ENCODE measurements at regions of chr5 and their contacts with region 1.

Region 1: GRCh38 chr5:75351139-75351926 is 14.3 kb downstream of the HMGCR start:
- DNase-seq: no peak
- H3K4me3 Mint-ChIP-seq: no peak overlapping the region
- H3K27ac Mint-ChIP-seq: peak overlapping the region; percentile 72
- H3K4me1 Mint-ChIP-seq: peaks cover 32% of the 10 kb centered on the region
- H3K27me3 Mint-ChIP-seq: no peaks in the 10 kb centered on the region

Region 2: GRCh38 chr5:75320341-75320740 is 31.0 kb before region 1 on chr5:
- intact Hi-C with region 1: loop called (anchors 1 kb)
- DNase-seq: no peak
- H3K4me3 Mint-ChIP-seq: no peak overlapping the region
- H3K27ac Mint-ChIP-seq: no peak overlapping the region
- H3K4me1 Mint-ChIP-seq: peaks cover 13% of the 10 kb centered on the region
- H3K27me3 Mint-ChIP-seq: peaks cover 2% of the 10 kb centered on the region

Region 3: GRCh38 chr5:75511435-75512384 is 160.4 kb after region 1 on chr5 and contains the starts of genes CERT1 and POLK:
- intact Hi-C with region 1: loop called (anchors 5 kb)
- DNase-seq: peak; percentile 96
- H3K4me3 Mint-ChIP-seq: peak within 1 kb of the TSS; percentile 99
- H3K27ac Mint-ChIP-seq: peak within 1 kb of the TSS; percentile 93
- H3K4me1 Mint-ChIP-seq: peaks cover 62% of the 10 kb centered on the region
- H3K27me3 Mint-ChIP-seq: no peaks in the 10 kb centered on the region
- total RNA-seq, gene CERT1: 41.0 and 43.4 TPM in 2 replicates
- total RNA-seq, gene POLK: 38.0 and 40.4 TPM in 2 replicates

Region 4: DNA sequence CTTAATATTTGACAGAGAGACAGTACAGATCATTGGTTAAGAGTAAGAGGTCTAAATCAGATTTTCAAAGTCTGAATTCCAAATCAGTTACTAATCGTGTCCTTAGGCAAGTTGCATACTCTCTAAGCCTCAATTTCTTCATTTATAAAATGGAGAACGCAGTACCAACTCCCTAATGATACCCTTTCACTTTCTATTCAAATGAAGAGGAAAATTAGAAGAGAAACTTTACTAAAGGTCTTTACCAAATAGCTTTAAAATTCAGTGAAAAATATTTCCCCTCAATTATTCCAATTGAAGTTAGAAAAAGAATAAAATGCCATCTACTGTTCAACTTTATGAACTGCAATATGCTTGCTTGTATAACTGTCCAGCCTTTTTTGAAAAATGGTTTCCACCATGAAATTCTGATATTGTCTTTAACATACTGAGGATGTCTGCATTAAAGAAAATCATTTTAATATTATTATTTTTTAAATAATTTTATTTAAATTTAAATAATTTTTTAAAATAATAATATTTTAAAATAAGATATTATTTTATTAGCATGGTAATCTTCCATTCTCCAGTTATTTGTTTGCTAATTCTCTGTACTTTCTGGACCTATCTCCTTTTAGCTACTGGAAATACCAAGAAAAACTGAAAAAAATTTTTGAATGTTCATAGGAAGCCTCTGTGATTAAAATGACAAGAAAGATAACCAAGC is 329.9 kb after region 1 on chr5:
- intact Hi-C with region 1: loop called (anchors 5 kb)
- DNase-seq: no peak
- H3K4me3 Mint-ChIP-seq: no peak overlapping the region
- H3K27ac Mint-ChIP-seq: no peak overlapping the region
- H3K4me1 Mint-ChIP-seq: peaks cover 11% of the 10 kb centered on the region
- H3K27me3 Mint-ChIP-seq: no peaks in the 10 kb centered on the region

Measured in activated T-helper 1 cell treated with anti-CD3 and anti-CD28 coated beads, Interleukin-12 subunit alpha, Interleukin-12 subunit beta, Interleukin-2, Interleukin-4 antibody, amounts not matched to agents 30 ng/mL and 10 ng/mL and 1 ng/mL, durations not matched to agents 14 hours and 24 hours and 36 hours (primary cell).